Keratinocyte (primary cell): ENCODE measurements at regions of chr18 and their contacts with region 1.

Region 1: GRCh38 chr18:6543330-6543908 is 128.7 kb upstream of the L3MBTL4 start:
- DNase-seq: no peak
- H3K4me3 ChIP-seq: no peak overlapping the region
- H3K27ac ChIP-seq: no peak overlapping the region
- H3K4me1 ChIP-seq: peaks cover 6% of the 10 kb centered on the region
- H3K27me3 ChIP-seq: no peaks in the 10 kb centered on the region
- CTCF ChIP-seq: peak in 2 of 3 experiments; percentile 27 to 31

Region 2: GRCh38 chr18:6239716-6240115 is 303.7 kb before region 1 on chr18:
- dilution Hi-C with region 1: no loop called
- DNase-seq: no peak
- H3K4me3 ChIP-seq: no peak overlapping the region
- H3K27ac ChIP-seq: no peak overlapping the region
- H3K4me1 ChIP-seq: no peaks in the 10 kb centered on the region
- H3K27me3 ChIP-seq: no peaks in the 10 kb centered on the region
- CTCF ChIP-seq: no peak

Region 3: GRCh38 chr18:6878556-6879297 is 335.3 kb after region 1 on chr18:
- dilution Hi-C with region 1: loop called (anchors 10 kb)
- DNase-seq: no peak
- H3K4me3 ChIP-seq: no peak overlapping the region
- H3K27ac ChIP-seq: no peak overlapping the region
- H3K4me1 ChIP-seq: no peaks in the 10 kb centered on the region
- H3K27me3 ChIP-seq: no peaks in the 10 kb centered on the region
- CTCF ChIP-seq: no peak